CD8-positive, alpha-beta T cell (primary cell): ENCODE measurements at regions of chr13 and their contacts with region 1.

Region 1: DNA sequence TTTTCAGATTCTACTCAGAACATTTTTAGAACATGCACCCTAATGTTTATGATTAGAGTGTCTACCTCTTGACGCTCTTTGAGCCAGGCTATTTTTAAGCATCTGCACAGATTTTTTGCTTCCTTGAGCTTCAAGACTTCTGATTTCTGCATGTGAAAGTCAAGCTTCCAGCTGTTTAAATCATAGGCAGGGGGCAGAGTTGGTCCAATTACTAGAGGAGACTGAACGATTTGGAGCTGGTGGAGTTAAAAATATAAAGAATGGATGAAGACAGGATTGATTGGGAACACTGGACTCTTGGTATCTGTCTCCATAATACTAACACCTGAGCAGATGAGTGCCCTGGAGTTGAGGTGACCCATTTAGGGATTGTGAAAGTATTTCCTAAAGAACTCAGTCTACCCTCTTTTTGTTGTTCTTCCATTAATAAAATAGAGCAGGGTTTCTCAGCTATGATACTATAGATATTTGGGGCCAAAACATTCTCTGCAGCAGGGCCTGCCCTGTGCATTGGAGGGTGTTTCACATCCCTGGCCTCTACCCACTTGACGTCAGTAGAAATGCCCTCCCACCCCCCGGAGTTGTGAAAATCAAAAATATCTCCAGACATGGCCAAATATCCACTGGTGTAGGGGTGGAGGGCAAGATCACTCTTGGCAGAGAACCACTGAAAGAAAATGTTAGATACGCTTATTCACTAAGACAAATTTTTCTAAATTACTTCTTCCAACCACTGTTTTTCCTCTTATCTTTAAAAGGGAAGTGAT is 160.1 kb downstream of the COG6 start:
- DNase-seq: no peak
- ATAC-seq: no peak
- H3K4me3 ChIP-seq: no peak overlapping the region
- H3K4me3 Mint-ChIP-seq: no peak overlapping the region
- H3K27ac ChIP-seq: no peak overlapping the region
- H3K27ac Mint-ChIP-seq: no peak overlapping the region
- H3K4me1 ChIP-seq: no peaks in the 10 kb centered on the region
- H3K4me1 Mint-ChIP-seq: no peaks in the 10 kb centered on the region
- H3K27me3 ChIP-seq: no peaks in the 10 kb centered on the region
- H3K27me3 Mint-ChIP-seq: no peaks in the 10 kb centered on the region
- CTCF ChIP-seq: no peak

Region 2: DNA sequence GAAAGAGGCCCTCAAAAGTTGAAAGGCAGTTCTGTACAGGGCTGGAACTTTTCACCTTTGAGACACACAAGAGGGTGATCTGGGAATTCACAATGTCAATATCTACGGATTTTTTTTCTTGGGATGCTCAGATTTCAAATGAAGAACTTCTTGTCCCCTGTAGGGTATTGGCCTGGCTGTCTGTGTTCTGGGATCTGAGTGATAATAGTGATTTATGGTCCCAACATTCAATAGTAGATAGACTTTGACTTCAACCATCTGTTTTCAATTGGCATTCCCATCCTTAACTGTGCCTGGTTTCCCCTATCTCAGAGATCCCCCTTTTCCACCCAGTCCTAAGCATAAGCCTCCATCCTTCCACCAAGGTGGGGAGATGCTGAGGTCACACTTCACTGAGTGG is 114.1 kb after region 1 on chr13:
- CTCF ChIA-PET with region 1: no interaction called
- POLR2A ChIA-PET with region 1: no interaction called
- intact Hi-C with region 1: loop called in 1 of 2 experiments (anchors 10 kb)
- DNase-seq: no peak
- ATAC-seq: no peak
- H3K4me3 ChIP-seq: no peak overlapping the region
- H3K4me3 Mint-ChIP-seq: no peak overlapping the region
- H3K27ac ChIP-seq: no peak overlapping the region
- H3K27ac Mint-ChIP-seq: no peak overlapping the region
- H3K4me1 ChIP-seq: no peaks in the 10 kb centered on the region
- H3K4me1 Mint-ChIP-seq: no peaks in the 10 kb centered on the region
- H3K27me3 ChIP-seq: no peaks in the 10 kb centered on the region
- H3K27me3 Mint-ChIP-seq: peaks cover 2% of the 10 kb centered on the region
- CTCF ChIP-seq: no peak